ENCODE measurements at regions of chr3 and their contacts with region 1.

Region 1: GRCh38 chr3:9352917-9353752 is 9.7 kb upstream of the THUMPD3 start:
- DNase-seq: peak; percentile 54 to 79
- ATAC-seq: peak; percentile 74 to 95 (median 84)
- H3K4me3 ChIP-seq: no peak overlapping the region
- H3K27ac ChIP-seq: no peak overlapping the region
- H3K4me1 ChIP-seq: peaks cover 10% of the 10 kb centered on the region
- H3K27me3 ChIP-seq: no peaks in the 10 kb centered on the region
- CTCF ChIP-seq: peak; percentile 90

Region 2: DNA sequence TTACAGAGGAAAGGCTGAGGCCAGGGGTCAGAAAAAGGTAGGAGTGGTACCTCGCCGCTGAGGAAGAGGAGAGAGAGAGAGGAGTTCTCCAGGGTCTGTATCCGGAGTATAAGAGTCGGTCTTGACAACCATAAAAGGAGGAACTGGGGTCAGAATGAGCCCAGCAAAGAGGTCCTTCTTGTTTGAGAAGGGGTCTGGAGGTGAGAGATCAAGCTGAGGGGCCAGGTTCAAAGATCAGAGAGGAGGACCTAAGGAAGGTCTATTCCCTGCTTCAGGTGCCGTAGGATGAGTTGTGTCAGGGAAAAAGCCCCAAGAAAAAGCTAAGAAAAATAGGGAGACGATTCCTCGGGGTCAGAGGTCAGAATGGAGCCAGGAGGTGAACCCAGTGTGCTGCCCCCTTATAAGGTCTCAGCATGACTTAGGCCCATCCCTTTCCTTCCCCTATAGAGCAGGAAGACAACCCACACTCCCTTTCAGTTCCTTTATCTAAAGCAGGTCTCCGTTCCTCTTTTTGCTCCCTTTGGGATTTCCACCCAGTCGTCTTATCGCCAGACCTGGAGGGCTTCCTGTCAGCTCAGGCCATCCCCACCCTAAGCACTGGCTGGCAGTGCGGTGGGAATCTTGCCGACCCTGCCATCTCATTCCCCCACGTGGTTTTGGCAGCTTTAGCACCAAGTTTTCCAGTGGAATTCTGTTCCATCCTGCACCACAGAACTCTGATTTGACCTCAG is 296.8 kb after region 1 on chr3:
- intact Hi-C with region 1: loop called in 1 of 2 experiments (anchors 10 kb)
- DNase-seq: no peak
- ATAC-seq: no peak
- H3K4me3 ChIP-seq: peak overlapping the region; percentile 92
- H3K27ac ChIP-seq: peak overlapping the region; percentile 94
- H3K4me1 ChIP-seq: peaks cover 42% of the 10 kb centered on the region
- H3K27me3 ChIP-seq: no peaks in the 10 kb centered on the region
- CTCF ChIP-seq: no peak